ENCODE measurements at regions of chr11 and their contacts with region 1.

Region 1: GRCh38 chr11:31369348-31370329 is at the starts of genes DCDC1 and DNAJC24:
- DNase-seq: peak; percentile 87 to 93 (median 91)
- H3K4me3 ChIP-seq: peak within 1 kb of the TSS; percentile 81 to 82
- H3K4me3 Mint-ChIP-seq: peak within 1 kb of the TSS; percentile 93 to 100 (median 99)
- H3K27ac ChIP-seq: peak within 1 kb of the TSS; percentile 78
- H3K27ac Mint-ChIP-seq: peak within 1 kb of the TSS; percentile 86 to 99 (median 98)
- H3K4me1 ChIP-seq: peaks cover 45% of the 10 kb centered on the region
- H3K4me1 Mint-ChIP-seq: peaks cover 37 to 70% (median 49%) of the 10 kb centered on the region in 4 donors
- H3K27me3 ChIP-seq: no peaks in the 10 kb centered on the region
- H3K27me3 Mint-ChIP-seq: no peaks in the 10 kb centered on the region
- total RNA-seq, gene DCDC1: 0.17 to 0.29 TPM
- total RNA-seq, gene DNAJC24: 24.8 to 27.1 TPM

Region 2: DNA sequence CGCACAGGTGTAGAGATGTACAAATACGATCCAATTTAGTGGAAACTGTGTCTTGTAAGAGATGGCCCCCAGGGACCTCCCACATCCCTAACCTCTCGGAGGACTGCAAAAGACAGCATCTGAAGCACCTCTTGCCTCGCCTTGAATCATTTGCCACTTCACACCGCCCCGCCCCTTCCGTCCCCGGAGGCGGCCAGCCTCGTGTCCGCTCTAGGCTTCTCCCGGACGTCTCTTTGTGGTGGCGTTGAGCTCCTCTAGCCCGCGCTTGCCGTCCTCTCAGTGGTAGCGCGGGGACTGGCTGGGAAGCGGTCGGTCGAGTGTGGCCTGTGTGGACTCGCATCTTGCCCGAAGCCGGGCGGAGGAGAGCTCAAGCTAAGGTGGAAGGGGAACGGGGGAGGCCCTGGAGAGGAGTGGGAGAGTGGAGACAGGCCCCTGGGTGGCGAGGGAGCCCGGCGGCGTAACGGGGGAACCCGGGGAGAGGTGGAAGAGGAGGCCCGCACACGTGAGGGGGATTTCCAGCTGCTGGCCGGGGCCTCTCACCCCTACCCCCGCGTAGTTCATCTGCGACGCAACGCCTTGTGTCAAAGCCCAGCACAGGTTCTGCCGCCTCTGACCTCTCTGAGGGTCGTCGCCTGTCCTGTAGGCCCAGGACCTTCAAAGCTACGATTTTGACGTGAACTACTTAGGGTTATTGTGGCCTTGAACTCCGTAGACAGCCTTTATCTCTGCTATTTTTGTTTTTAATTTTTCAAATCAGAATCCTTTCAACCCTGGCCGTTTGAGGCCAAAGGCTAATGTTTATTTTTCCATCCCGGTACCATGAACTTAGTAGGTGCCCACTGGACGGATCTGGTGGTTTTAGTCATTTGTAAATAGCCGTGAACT is 1046.6 kb before region 1 on chr11 and contains the start of gene ARL14EP:
- CTCF ChIA-PET with region 1: no interaction called
- POLR2A ChIA-PET with region 1: interaction called, 4 read pairs
- intact Hi-C with region 1: loop called (anchors 5 kb)
- DNase-seq: peak; percentile 86 to 90 (median 88)
- H3K4me3 ChIP-seq: peak within 1 kb of the TSS; percentile 74 to 92
- H3K4me3 Mint-ChIP-seq: peak within 1 kb of the TSS; percentile 99 to 100 (median 99)
- H3K27ac ChIP-seq: peak within 1 kb of the TSS; percentile 94
- H3K27ac Mint-ChIP-seq: peak within 1 kb of the TSS; percentile 99 to 100 (median 99)
- H3K4me1 ChIP-seq: peaks cover 50% of the 10 kb centered on the region
- H3K4me1 Mint-ChIP-seq: peaks cover 33 to 58% (median 47%) of the 10 kb centered on the region in 4 donors
- H3K27me3 ChIP-seq: no peaks in the 10 kb centered on the region
- H3K27me3 Mint-ChIP-seq: peaks cover 2 to 6% of the 10 kb centered on the region in 2 donors
- total RNA-seq, gene ARL14EP: 44.3 to 50.1 TPM

Region 3: DNA sequence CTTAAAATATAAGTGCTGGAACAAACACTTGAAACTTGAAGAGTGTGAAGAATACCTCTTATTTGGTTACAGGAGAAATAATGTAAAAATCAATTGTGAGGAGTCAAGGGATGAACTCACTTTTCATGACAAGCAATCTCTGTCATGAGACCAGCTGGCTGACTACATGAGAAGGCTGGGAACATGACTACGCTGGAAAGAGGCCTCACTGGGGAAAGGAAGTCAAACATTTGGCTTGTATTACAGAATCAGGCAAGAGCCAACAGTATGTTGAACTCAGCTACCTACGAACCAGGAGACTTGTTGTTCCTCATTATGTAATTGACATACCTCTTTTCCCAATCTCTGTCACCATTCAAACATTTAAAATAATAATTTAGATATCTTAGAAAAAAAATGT is 14.5 kb before region 1 on chr11:
- CTCF ChIA-PET with region 1: no interaction called
- POLR2A ChIA-PET with region 1: no interaction called
- intact Hi-C with region 1: no loop called
- DNase-seq: no peak
- H3K4me3 ChIP-seq: no peak overlapping the region
- H3K4me3 Mint-ChIP-seq: no peak overlapping the region
- H3K27ac ChIP-seq: no peak overlapping the region
- H3K27ac Mint-ChIP-seq: no peak overlapping the region
- H3K4me1 ChIP-seq: no peaks in the 10 kb centered on the region
- H3K4me1 Mint-ChIP-seq: no peaks in the 10 kb centered on the region
- H3K27me3 ChIP-seq: no peaks in the 10 kb centered on the region
- H3K27me3 Mint-ChIP-seq: peaks cover 0 to 8% of the 10 kb centered on the region in 2 donors

Region 4: GRCh38 chr11:31531293-31531692 is 161.7 kb after region 1 on chr11:
- CTCF ChIA-PET with region 1: no interaction called
- POLR2A ChIA-PET with region 1: no interaction called
- intact Hi-C with region 1: no loop called
- DNase-seq: no peak
- H3K4me3 ChIP-seq: no peak overlapping the region
- H3K4me3 Mint-ChIP-seq: no peak overlapping the region
- H3K27ac ChIP-seq: no peak overlapping the region
- H3K27ac Mint-ChIP-seq: no peak overlapping the region
- H3K4me1 ChIP-seq: no peaks in the 10 kb centered on the region
- H3K4me1 Mint-ChIP-seq: no peaks in the 10 kb centered on the region
- H3K27me3 ChIP-seq: no peaks in the 10 kb centered on the region
- H3K27me3 Mint-ChIP-seq: no peaks in the 10 kb centered on the region

Region 5: GRCh38 chr11:32090545-32091373 is 721.1 kb after region 1 on chr11 and contains the start of gene RCN1:
- CTCF ChIA-PET with region 1: no interaction called
- POLR2A ChIA-PET with region 1: no interaction called
- intact Hi-C with region 1: loop called (anchors 5 kb)
- DNase-seq: no peak
- H3K4me3 ChIP-seq: peak within 1 kb of the TSS; percentile 57 to 90
- H3K4me3 Mint-ChIP-seq: peak within 1 kb of the TSS; percentile 81 to 89 (median 86)
- H3K27ac ChIP-seq: peak within 1 kb of the TSS; percentile 54
- H3K27ac Mint-ChIP-seq: peak within 1 kb of the TSS; percentile 47 to 95 (median 88)
- H3K4me1 ChIP-seq: peaks cover 16% of the 10 kb centered on the region
- H3K4me1 Mint-ChIP-seq: peaks cover 14 to 35% (median 21%) of the 10 kb centered on the region in 4 donors
- H3K27me3 ChIP-seq: no peaks in the 10 kb centered on the region
- H3K27me3 Mint-ChIP-seq: peaks cover 0 to 7% of the 10 kb centered on the region in 2 donors
- total RNA-seq, gene RCN1: 6.3 to 6.9 TPM

Region 6: GRCh38 chr11:32583459-32584271 is 1214.0 kb after region 1 on chr11 and contains the start of gene EIF3M:
- CTCF ChIA-PET with region 1: no interaction called
- POLR2A ChIA-PET with region 1: interaction called, 3 read pairs
- intact Hi-C with region 1: loop called (anchors 5 kb)
- DNase-seq: peak; percentile 94 to 95 (median 94)
- H3K4me3 ChIP-seq: peak within 1 kb of the TSS; percentile 73 to 89
- H3K4me3 Mint-ChIP-seq: peak within 1 kb of the TSS; percentile 94 to 99 (median 97)
- H3K27ac ChIP-seq: peak within 1 kb of the TSS; percentile 93
- H3K27ac Mint-ChIP-seq: peak within 1 kb of the TSS; percentile 95 to 99 (median 98)
- H3K4me1 ChIP-seq: peaks cover 41% of the 10 kb centered on the region
- H3K4me1 Mint-ChIP-seq: peaks cover 31 to 51% (median 39%) of the 10 kb centered on the region in 4 donors
- H3K27me3 ChIP-seq: no peaks in the 10 kb centered on the region
- H3K27me3 Mint-ChIP-seq: no peaks in the 10 kb centered on the region
- total RNA-seq, gene EIF3M: 214 to 223 TPM